RWPE1 (cell line): ENCODE measurements at regions of chr18 and their contacts with region 1.

Region 1: DNA sequence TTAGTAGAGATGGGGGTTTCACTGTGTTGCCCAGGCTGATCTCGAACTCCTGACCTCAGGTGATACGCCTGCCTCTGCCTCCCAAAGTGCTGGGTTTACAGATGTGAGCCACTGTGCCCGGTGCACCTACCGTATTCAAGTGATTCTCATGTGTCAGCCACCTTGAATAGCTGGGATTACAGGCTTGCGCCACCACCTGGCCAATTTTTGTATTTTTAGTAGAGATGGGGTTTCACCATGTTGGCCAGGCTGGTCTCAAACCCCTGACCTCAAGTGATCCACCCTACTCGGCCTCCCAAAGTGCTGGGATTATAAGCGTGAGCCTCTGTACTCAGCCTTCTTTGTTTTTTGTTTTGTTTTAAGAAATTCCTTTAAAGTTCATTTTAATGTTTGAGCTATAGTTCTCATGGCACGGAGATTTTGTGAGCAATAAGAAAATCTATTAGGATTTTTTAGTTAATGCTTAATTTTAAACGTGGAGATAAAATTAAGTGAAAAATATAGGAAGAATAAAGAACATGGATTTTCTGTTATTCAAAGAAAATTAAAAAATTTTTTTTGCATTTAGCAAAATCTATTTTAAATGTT is 242.6 kb downstream of the PHLPP1 start:
- DNase-seq: no peak
- H3K27ac ChIP-seq: no peak overlapping the region
- CTCF ChIP-seq: peak; percentile 56

Region 2: GRCh38 chr18:62715801-62716678 is 241.9 kb before region 1 on chr18:
- CTCF ChIA-PET with region 1: interaction called, 11 read pairs
- POLR2A ChIA-PET with region 1: no interaction called
- DNase-seq: peak; percentile 49
- H3K27ac ChIP-seq: peak overlapping the region; percentile 95
- CTCF ChIP-seq: no peak